Activated CD4-positive, alpha-beta memory T cell treated with anti-CD3 and anti-CD28 coated beads for 36 hours (primary cell): ENCODE measurements at regions of chr1 and their contacts with region 1.

Region 1: DNA sequence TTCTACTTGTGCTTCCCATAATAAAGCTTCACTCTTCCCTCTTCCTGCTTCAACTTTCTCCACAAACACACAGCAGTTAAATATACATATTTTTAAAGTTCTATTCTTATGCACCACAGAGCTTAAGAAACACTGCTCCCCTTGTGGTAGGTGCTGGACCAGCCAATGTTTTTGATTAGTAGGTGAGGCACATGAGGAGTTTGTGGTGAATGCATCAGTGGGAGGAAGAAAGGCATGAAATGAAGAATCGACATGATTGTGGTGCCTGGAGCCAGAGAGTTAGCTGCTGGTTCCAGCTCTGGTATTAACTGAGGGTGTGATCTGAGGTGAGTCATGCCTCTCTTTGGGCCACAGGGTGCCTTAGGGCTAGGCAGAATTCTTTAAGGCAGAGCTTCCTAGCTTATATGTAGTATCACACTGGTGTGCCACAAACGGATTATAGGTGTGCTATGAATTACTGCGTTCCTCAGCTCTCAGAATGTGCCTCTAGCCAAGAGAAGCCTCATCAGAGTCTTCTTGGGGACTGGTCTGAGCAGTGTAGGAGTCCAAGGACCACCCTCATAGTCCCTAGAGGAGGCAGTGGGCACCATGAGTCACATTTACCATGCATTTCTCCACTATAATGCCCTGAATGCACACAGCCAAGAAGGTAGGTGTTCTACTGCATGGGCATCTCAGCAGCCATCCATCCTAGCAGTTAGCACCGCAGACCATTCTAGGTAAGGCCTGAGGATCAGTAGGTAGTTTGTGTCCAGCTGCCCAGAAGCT is 97.4 kb upstream of the SGIP1 start:
- DNase-seq: peak; percentile 81
- H3K4me3 Mint-ChIP-seq: no peak overlapping the region
- H3K27ac Mint-ChIP-seq: peak overlapping the region; percentile 39
- H3K4me1 Mint-ChIP-seq: peaks cover 39% of the 10 kb centered on the region
- H3K27me3 Mint-ChIP-seq: no peaks in the 10 kb centered on the region

Region 2: GRCh38 chr1:66253330-66253921 is 183.1 kb before region 1 on chr1:
- CTCF ChIA-PET with region 1: interaction called, 476 read pairs
- POLR2A ChIA-PET with region 1: interaction called, 12 read pairs
- intact Hi-C with region 1: loop called (anchors 1 kb)
- DNase-seq: no peak
- H3K4me3 Mint-ChIP-seq: no peak overlapping the region
- H3K27ac Mint-ChIP-seq: no peak overlapping the region
- H3K4me1 Mint-ChIP-seq: peaks cover 51% of the 10 kb centered on the region
- H3K27me3 Mint-ChIP-seq: no peaks in the 10 kb centered on the region

Region 3: GRCh38 chr1:66276218-66276617 is 160.3 kb before region 1 on chr1:
- CTCF ChIA-PET with region 1: interaction called, 19 read pairs
- POLR2A ChIA-PET with region 1: interaction called, 7 read pairs
- intact Hi-C with region 1: loop called (anchors 1 kb)
- DNase-seq: peak; percentile 44
- H3K4me3 Mint-ChIP-seq: peak overlapping the region; percentile 49
- H3K27ac Mint-ChIP-seq: peak overlapping the region; percentile 65
- H3K4me1 Mint-ChIP-seq: peaks cover 87% of the 10 kb centered on the region
- H3K27me3 Mint-ChIP-seq: no peaks in the 10 kb centered on the region

Region 4: GRCh38 chr1:66331657-66332547 is 104.7 kb before region 1 on chr1:
- CTCF ChIA-PET with region 1: interaction called, 16 read pairs
- POLR2A ChIA-PET with region 1: interaction called, 9 read pairs
- intact Hi-C with region 1: loop called (anchors 1 kb)
- DNase-seq: peak; percentile 75
- H3K4me3 Mint-ChIP-seq: peak overlapping the region; percentile 93
- H3K27ac Mint-ChIP-seq: peak overlapping the region; percentile 96
- H3K4me1 Mint-ChIP-seq: peaks cover 48% of the 10 kb centered on the region
- H3K27me3 Mint-ChIP-seq: no peaks in the 10 kb centered on the region

Region 5: DNA sequence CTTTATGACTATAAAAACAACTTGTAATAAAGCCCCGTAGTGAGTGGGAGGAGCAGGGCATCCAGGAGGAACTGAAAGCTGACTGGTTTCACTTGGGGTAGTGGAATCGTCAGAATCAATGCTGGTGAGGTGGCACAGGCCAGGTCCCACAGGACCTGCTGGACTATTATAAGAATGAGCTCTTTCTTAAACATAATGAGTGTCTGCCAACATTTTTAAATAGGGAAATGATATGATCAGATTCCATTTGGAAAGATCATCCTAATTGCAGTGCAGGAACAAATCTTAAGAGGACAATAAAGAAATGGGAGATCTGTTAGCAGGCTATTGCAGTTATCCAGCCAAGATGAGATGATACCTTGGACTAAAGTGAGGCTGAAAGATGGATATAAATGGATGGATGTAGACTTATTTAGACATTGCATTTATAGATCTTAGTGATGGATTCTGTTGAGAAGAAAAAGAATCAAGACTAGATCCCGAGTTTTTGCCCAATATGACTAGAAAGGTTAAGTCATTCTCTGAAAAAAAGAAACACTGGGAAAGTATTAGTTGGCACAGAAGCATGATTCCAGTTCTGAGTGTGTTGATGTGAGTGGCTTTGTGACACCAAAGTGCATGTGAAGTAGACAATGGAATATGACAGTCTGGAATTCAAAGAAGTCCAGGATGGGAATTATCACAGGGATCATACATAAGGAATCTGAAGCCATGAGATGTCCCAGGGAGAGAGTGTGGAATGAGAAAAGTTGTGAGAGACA is 55.9 kb before region 1 on chr1:
- CTCF ChIA-PET with region 1: interaction called, 45 read pairs
- POLR2A ChIA-PET with region 1: interaction called, 14 read pairs
- intact Hi-C with region 1: loop called (anchors 1 kb)
- DNase-seq: peak; percentile 62
- H3K4me3 Mint-ChIP-seq: no peak overlapping the region
- H3K27ac Mint-ChIP-seq: peak overlapping the region; percentile 1
- H3K4me1 Mint-ChIP-seq: peaks cover 53% of the 10 kb centered on the region
- H3K27me3 Mint-ChIP-seq: no peaks in the 10 kb centered on the region

Region 6: DNA sequence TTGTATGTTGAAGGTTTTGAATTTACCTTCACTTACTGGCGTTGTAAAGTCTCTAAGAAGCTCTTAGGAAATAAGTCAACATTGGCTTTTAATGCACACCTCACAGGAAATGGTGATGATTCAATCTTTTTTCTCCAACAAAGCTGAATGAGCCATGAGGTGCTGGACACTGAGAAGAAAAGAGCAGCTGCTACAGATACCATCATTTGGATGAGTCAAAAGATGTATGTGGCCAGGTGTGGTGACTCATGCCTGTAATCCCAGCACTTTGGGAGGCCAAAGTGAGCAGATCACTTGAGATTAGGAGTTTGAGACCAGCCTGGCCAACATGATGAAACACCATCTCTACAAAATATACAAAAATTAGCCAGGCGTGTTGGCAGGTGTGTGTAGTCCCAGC is 726.4 kb after region 1 on chr1:
- CTCF ChIA-PET with region 1: no interaction called
- POLR2A ChIA-PET with region 1: no interaction called
- intact Hi-C with region 1: loop called (anchors 10 kb)
- DNase-seq: peak; percentile 78
- H3K4me3 Mint-ChIP-seq: peak overlapping the region; percentile 30
- H3K27ac Mint-ChIP-seq: peak overlapping the region; percentile 73
- H3K4me1 Mint-ChIP-seq: peaks cover 56% of the 10 kb centered on the region
- H3K27me3 Mint-ChIP-seq: peaks cover 5% of the 10 kb centered on the region